Head of caudate nucleus (tissue), 42 donors: ENCODE measurements at regions of chr1 and their contacts with region 1.

Region 1: GRCh38 chr1:29181413-29182225 is at the start of gene SRSF4:
- DNase-seq: peak; percentile 95 to 99 (median 98)

Region 2: GRCh38 chr1:28736450-28737306 is 444.9 kb before region 1 on chr1 and contains the start of gene YTHDF2:
- intact Hi-C with region 1: loop called (anchors 5 kb)
- DNase-seq: peak; percentile 89 to 98 (median 96)

Region 3: DNA sequence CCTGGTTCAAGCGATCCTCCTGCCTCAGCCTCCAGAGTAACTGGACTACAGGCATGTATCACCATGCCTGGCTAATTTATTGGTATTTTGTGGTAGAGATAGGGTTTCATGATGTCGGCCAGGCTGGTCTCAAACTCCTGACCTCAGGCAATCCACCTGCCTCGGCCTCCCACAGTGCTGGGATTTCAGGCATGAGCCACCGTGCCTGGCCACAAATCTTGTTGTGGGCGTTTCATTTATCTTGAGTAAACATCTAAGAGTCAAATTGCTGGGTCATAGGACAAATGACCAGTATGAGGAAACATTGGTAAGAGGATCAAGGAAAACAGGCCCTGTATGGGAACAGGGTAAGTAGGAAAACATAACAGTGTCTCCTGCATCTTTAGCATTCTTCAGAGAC is 75.8 kb before region 1 on chr1:
- intact Hi-C with region 1: no loop called
- DNase-seq: no peak

Region 4: DNA sequence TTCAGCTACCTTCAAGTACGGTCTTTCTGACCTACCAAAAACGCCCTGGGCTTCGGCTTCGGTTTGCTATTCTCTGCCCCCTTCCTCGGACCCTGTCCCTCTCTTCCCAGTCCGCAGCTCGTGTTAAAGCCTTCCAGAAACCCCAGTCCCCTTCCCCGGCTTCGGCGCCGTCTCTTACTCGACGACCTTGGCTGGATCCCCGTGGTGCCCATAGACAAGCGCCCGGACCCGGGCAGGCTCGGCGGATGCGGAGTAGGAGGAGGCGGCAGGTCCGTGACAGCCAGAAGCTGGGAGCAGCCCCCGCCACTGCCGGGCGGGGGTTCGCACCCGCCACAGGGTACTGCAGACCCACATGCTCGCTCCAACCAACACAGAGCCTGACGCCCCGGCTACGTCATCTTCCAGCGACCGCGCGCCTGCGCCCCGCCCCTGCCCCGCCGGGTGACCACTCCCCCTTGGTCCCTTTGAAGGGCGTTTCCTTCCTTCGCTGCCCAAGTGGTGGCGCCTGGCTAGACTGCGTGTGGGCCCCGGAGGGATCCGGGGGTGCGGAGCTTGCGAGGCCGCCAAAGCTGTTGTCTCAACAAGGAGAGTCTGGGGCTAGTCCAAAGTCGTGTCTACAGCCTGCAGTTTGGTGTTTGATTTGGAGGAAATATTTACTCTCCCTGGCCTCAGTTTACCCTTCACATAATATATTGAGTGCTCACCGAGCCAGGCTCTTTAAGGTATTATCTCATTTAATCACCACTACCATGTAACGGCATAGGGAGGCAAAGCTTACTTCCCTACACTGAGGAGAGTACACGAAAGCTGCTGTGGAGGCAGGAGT is 49.1 kb after region 1 on chr1 and contains the start of gene MECR:
- intact Hi-C with region 1: no loop called
- DNase-seq: peak; percentile 89 to 98 (median 95)